ENCODE measurements at regions of chr14 and their contacts with region 1.

Region 1: DNA sequence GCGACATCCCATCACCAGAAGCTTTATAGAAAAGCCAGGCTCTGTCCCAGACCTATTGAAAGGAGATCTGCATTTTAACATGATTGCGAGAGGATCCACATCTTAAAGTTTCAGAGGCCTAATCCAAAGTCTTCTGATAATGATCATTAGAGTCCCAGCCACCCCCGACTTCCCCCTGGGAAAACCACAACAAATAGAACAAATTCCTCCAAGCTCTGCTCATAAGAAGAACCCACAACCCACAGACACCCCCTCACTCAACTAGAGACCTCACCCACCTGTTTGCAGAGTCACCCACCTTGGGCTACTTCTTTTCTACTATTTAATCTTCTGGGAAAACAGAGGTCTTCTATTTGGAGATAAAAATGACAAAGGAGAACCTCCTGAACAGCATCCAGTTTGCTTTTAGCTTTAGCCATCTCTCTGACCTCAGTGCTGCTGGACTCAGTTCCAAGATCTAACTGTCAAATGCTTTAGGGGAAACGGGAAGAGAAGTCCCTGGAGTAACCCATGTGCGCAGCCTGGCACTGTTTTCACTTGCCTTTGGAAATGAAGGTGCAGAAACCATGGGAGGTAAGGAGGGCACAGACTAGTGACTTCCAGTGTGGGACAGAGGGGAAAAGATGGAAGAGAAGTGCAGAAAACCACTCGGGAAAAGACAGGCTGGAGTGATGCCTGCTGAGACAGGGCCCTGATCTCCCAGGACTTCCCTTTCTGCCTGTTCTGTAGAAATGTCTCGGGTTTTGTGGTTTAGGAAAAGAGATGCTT is 124.9 kb upstream of the HIF1A start:
- DNase-seq: no peak
- H3K4me3 Mint-ChIP-seq: no peak overlapping the region
- H3K27ac Mint-ChIP-seq: peak overlapping the region; percentile 86
- H3K4me1 Mint-ChIP-seq: peaks cover 76% of the 10 kb centered on the region
- H3K27me3 Mint-ChIP-seq: peaks cover 4% of the 10 kb centered on the region

Region 2: DNA sequence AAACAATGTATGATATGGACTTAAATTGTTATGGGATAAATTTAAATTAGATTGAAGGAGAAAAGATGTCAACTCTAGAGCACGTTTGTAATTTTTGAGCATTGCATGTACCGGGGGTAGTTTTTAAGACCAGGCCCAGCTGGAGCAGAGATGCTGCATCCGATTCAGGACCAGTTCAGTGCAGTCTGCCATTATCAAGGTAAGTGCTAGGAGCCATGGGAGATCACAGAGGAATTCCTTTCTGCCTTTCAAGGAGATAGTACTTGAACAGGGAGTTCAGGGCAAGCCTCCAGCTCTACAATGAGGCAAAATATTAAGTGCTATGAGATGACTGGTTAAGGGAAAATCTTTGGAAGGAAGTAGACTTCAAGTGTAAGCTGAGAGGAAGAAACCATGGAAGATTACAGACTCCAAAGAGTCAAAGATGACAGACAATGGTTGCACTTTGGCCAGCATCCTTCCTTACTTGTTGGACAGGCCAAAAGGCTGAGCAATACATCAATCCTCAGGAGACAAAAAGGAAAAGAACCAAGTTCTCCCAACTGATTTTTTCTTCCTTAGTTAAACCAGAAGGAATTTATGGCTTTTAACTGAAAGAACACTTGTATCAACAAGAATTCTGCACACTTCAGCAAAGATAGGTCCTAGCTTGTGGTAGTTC is 11.7 kb after region 1 on chr14:
- CTCF ChIA-PET with region 1: interaction called, 11 read pairs
- POLR2A ChIA-PET with region 1: no interaction called
- DNase-seq: no peak
- H3K4me3 Mint-ChIP-seq: no peak overlapping the region
- H3K27ac Mint-ChIP-seq: no peak overlapping the region
- H3K4me1 Mint-ChIP-seq: peaks cover 46% of the 10 kb centered on the region
- H3K27me3 Mint-ChIP-seq: peaks cover 3% of the 10 kb centered on the region